ENCODE measurements at regions of chr10 and their contacts with region 1.

Region 1: DNA sequence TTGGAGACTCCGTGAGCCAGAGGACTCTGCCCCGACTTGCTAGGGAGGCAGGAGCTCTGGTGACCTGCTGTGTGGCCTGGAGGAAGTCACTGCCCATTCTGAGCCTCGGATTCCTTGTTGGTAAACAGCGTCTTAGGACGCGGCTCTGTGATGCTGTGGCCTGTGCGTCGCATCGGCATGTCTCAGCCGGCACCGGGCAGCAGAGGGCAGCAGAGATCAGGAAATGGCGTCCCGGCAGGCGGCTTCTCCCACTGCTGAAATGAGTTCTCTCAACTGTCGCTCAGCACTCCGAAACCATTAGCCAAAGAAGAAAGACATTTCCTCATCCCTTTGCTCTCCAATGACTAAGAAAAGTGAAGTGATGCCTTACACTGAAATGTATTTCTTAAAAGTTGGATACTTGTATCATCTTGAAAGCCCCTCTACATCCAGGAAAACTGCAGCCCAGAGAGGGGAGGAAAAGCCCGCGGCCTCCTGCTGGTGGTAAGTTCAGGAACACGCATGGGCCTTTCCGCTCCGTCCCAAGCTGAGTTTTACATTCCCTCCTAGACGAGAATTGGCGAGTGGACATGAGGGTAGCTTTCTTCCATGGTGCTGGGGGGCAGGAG is 91.7 kb downstream of the WDR11 start:
- DNase-seq: peak; percentile 90
- H3K4me3 ChIP-seq: peak overlapping the region in 1 of 8 donors; percentile 21
- H3K27ac ChIP-seq: no peak overlapping the region
- H3K4me1 ChIP-seq: peaks cover 0 to 10% (median 7%) of the 10 kb centered on the region in 6 donors
- H3K27me3 ChIP-seq: peaks cover 0 to 46% (median 0%) of the 10 kb centered on the region in 7 donors
- CTCF ChIP-seq: peak; percentile 52 to 92 (median 82)
- POLR2A ChIP-seq: no peak

Region 2: DNA sequence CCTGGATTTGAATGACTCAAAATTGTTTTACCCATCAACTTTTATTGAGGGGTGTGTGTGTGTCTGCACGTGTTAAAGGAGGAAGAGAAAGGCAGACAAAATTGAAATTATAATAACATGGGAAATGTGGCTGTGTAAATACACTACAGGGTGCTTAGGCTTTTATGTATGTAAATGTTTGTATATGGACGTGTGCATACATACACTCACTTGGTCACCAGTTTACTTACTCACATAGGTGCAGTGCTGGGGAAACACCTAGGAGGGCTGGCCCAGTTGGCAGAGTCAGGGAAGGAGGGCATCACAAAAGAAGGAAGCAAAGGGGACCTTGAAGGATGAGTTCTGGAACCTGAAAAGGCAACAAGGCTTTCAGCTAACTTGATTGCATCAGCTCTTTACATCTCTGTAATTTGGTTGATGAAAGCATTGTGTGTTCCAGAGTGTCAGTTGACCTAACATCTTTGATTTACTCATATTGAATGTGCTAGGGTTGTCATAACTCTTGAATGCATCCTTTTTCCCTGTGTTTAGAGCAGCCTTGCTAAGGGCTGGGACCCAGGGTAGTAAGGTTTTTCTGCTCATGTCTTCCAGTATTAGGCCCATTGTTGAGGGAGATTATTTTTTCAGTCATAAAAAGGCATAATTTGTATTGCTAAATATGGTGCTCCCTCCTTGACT is 81.6 kb before region 1 on chr10:
- intact Hi-C with region 1: no loop called
- DNase-seq: no peak
- H3K4me3 ChIP-seq: no peak overlapping the region
- H3K27ac ChIP-seq: no peak overlapping the region
- H3K4me1 ChIP-seq: no peaks in the 10 kb centered on the region
- H3K27me3 ChIP-seq: no peaks in the 10 kb centered on the region
- CTCF ChIP-seq: no peak
- POLR2A ChIP-seq: no peak

Region 3: GRCh38 chr10:120999868-121000267 is 57.0 kb after region 1 on chr10:
- intact Hi-C with region 1: no loop called
- DNase-seq: no peak
- H3K4me3 ChIP-seq: no peak overlapping the region
- H3K27ac ChIP-seq: no peak overlapping the region
- H3K4me1 ChIP-seq: no peaks in the 10 kb centered on the region
- H3K27me3 ChIP-seq: peaks cover 0 to 33% (median 0%) of the 10 kb centered on the region in 7 donors
- CTCF ChIP-seq: no peak
- POLR2A ChIP-seq: no peak

Region 4: GRCh38 chr10:121734589-121735045 is 791.7 kb after region 1 on chr10:
- intact Hi-C with region 1: loop called (anchors 5 kb)
- DNase-seq: no peak
- H3K4me3 ChIP-seq: no peak overlapping the region
- H3K27ac ChIP-seq: no peak overlapping the region
- H3K4me1 ChIP-seq: peaks cover 0 to 29% (median 13%) of the 10 kb centered on the region in 6 donors
- H3K27me3 ChIP-seq: peaks cover 0 to 44% (median 0%) of the 10 kb centered on the region in 7 donors
- CTCF ChIP-seq: peak in 9 of 11 experiments; percentile 28 to 77 (median 55)
- POLR2A ChIP-seq: no peak

Region 5: DNA sequence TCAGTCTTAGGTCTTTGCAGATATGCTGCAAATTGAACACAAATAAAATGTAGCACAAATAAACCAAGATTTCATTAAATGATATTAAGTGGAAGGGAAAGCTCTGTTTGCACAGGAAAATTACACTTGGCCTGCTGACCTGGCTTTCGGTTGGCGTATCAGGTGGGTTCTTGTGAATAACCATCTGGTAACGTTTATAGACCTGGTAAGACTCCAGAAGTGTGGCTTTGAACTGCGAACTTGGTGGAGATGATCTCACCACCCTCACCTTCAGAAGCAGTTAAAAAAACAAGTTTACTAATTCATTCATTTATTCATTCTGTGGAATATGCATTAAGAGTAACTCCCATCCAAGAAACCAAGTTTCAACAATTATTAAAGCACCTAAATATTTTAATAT is 956.8 kb after region 1 on chr10:
- intact Hi-C with region 1: loop called (anchors 5 kb)
- DNase-seq: no peak
- H3K4me3 ChIP-seq: no peak overlapping the region
- H3K27ac ChIP-seq: no peak overlapping the region
- H3K4me1 ChIP-seq: peaks cover 0 to 7% (median 2%) of the 10 kb centered on the region in 6 donors
- H3K27me3 ChIP-seq: no peaks in the 10 kb centered on the region
- CTCF ChIP-seq: no peak
- POLR2A ChIP-seq: no peak

Measured in spleen (tissue), 13 donors.